ENCODE measurements at regions of chr12 and their contacts with region 1.

Region 1: GRCh38 chr12:48851883-48852733 is at the start of gene DDX23:
- DNase-seq: peak; percentile 92 to 96
- ATAC-seq: peak; percentile 98 to 99 (median 98)
- H3K4me3 ChIP-seq: peak within 1 kb of the TSS; percentile 63 to 96 (median 87)
- H3K27ac ChIP-seq: peak within 1 kb of the TSS; percentile 57 to 97 (median 87)
- H3K4me1 ChIP-seq: peaks cover 4 to 30% (median 24%) of the 10 kb centered on the region in 9 donors
- H3K27me3 ChIP-seq: no peaks in the 10 kb centered on the region
- CTCF ChIP-seq: no peak
- total RNA-seq, gene DDX23: 26.1 to 44.7 (median 32.1) TPM

Region 2: GRCh38 chr12:48728807-48729206 is 123.3 kb before region 1 on chr12:
- intact Hi-C with region 1: no loop called
- DNase-seq: no peak
- ATAC-seq: no peak
- H3K4me3 ChIP-seq: no peak overlapping the region
- H3K27ac ChIP-seq: no peak overlapping the region
- H3K4me1 ChIP-seq: no peaks in the 10 kb centered on the region
- H3K27me3 ChIP-seq: no peaks in the 10 kb centered on the region
- CTCF ChIP-seq: no peak

Region 3: GRCh38 chr12:48890657-48891418 is 38.7 kb after region 1 on chr12:
- intact Hi-C with region 1: loop called (anchors 1 to 5 kb)
- DNase-seq: peak; percentile 75 to 82
- ATAC-seq: peak; percentile 96 to 99 (median 98)
- H3K4me3 ChIP-seq: peak overlapping the region in 8 of 10 donors; percentile 19 to 41 (median 35)
- H3K27ac ChIP-seq: no peak overlapping the region
- H3K4me1 ChIP-seq: peaks cover 0 to 11% (median 8%) of the 10 kb centered on the region in 9 donors
- H3K27me3 ChIP-seq: peaks cover 0 to 21% (median 5%) of the 10 kb centered on the region in 7 donors
- CTCF ChIP-seq: peak; percentile 84 to 98 (median 95)

Region 4: DNA sequence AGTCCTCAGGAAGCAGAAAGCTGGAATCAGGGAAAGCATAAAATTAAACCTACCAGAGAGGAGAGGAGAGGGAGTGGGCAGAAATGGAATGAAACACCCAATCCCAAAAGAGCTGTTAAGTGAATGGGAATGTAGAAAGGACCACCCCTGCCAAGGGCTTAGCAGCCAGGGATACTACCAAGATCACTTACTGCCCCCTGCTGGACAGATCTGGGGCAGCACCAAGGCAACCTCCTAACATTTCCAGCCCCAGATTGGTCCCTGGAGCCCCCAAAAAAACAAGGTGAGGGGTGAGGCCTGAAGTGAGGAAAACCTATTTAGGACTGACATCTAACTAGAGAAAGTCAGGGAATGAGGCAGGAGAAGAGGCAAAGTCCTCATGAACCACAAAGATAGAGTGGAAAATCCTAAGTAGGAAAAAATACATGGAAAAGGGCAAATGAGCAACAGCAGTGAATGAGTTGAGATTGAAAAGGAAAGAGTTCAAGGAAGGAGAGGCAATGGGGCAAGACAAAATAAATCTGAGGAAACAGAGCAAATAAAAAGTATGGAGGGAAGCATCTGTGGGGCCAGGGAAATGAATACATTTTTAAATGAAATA is 84.4 kb after region 1 on chr12:
- intact Hi-C with region 1: loop called in 6 of 10 experiments (anchors 1 to 10 kb)
- DNase-seq: peak; percentile 69 to 70
- ATAC-seq: peak; percentile 48 to 84 (median 62)
- H3K4me3 ChIP-seq: no peak overlapping the region
- H3K27ac ChIP-seq: no peak overlapping the region
- H3K4me1 ChIP-seq: peaks cover 0 to 16% (median 0%) of the 10 kb centered on the region in 9 donors
- H3K27me3 ChIP-seq: no peaks in the 10 kb centered on the region
- CTCF ChIP-seq: peak; percentile 84 to 96 (median 89)

Region 5: GRCh38 chr12:48988030-48988649 is 136.0 kb after region 1 on chr12:
- intact Hi-C with region 1: loop called in 2 of 10 experiments (anchors 10 kb)
- DNase-seq: peak in 1 of 2 donors; percentile 67
- ATAC-seq: peak in 7 of 8 donors; percentile 34 to 62 (median 54)
- H3K4me3 ChIP-seq: no peak overlapping the region
- H3K27ac ChIP-seq: no peak overlapping the region
- H3K4me1 ChIP-seq: peaks cover 0 to 20% (median 7%) of the 10 kb centered on the region in 9 donors
- H3K27me3 ChIP-seq: peaks cover 0 to 93% (median 67%) of the 10 kb centered on the region in 7 donors
- CTCF ChIP-seq: peak; percentile 71 to 95 (median 82)

Region 6: GRCh38 chr12:48995061-48995879 is 143.2 kb after region 1 on chr12:
- intact Hi-C with region 1: loop called in 2 of 10 experiments (anchors 5 to 10 kb)
- DNase-seq: peak; percentile 79 to 80
- ATAC-seq: peak; percentile 61 to 87 (median 79)
- H3K4me3 ChIP-seq: peak overlapping the region in 9 of 10 donors; percentile 8 to 40 (median 29)
- H3K27ac ChIP-seq: no peak overlapping the region
- H3K4me1 ChIP-seq: peaks cover 13 to 54% (median 39%) of the 10 kb centered on the region in 9 donors
- H3K27me3 ChIP-seq: peaks cover 4 to 93% (median 55%) of the 10 kb centered on the region in 7 donors
- CTCF ChIP-seq: peak; percentile 65 to 91 (median 87)

Measured in heart right ventricle (tissue), 16 donors.